Mammary epithelial cell (primary cell): ENCODE measurements at regions of chr7 and their contacts with region 1.

Region 1: GRCh38 chr7:22726345-22727185 is 435 bp upstream of the IL6 start:
- DNase-seq: peak; percentile 84
- H3K4me3 ChIP-seq: no peak overlapping the region
- H3K27ac ChIP-seq: peak overlapping the region; percentile 69
- H3K4me1 ChIP-seq: peaks cover 38% of the 10 kb centered on the region
- H3K27me3 ChIP-seq: no peaks in the 10 kb centered on the region
- CTCF ChIP-seq: peak; percentile 46 to 76

Region 2: GRCh38 chr7:22565315-22565811 is 161.2 kb before region 1 on chr7:
- CTCF ChIA-PET with region 1: interaction called, 25 read pairs
- dilution Hi-C with region 1: no loop called
- in situ Hi-C with region 1: loop called (anchors 5 kb)
- intact Hi-C with region 1: loop called (anchors 1 kb)
- DNase-seq: peak; percentile 92
- H3K4me3 ChIP-seq: no peak overlapping the region
- H3K27ac ChIP-seq: peak overlapping the region; percentile 81
- H3K4me1 ChIP-seq: peaks cover 61% of the 10 kb centered on the region
- H3K27me3 ChIP-seq: no peaks in the 10 kb centered on the region
- CTCF ChIP-seq: no peak

Region 3: DNA sequence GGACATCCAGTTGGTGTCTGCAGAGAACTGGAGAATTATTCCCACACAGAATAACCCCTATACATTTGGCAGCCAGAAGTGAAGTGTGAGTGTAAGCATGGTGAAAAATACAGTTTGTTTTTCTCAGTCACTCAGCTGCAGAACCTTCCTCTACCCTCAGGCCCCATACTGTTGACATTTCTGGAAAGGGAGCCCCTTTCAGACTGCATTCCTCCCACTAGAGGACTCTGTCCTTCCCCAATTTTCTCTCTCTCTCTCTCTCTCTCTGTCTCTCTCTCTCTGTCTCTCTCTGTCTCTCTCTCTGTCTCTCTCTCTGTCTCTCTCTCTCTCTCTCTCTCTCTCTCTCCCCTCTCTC is 139.8 kb before region 1 on chr7:
- CTCF ChIA-PET with region 1: no interaction called
- dilution Hi-C with region 1: no loop called
- in situ Hi-C with region 1: no loop called
- intact Hi-C with region 1: loop called (anchors 1 kb)
- DNase-seq: peak; percentile 34
- H3K4me3 ChIP-seq: no peak overlapping the region
- H3K27ac ChIP-seq: no peak overlapping the region
- H3K4me1 ChIP-seq: peaks cover 33% of the 10 kb centered on the region
- H3K27me3 ChIP-seq: no peaks in the 10 kb centered on the region
- CTCF ChIP-seq: peak; percentile 32 to 59

Region 4: GRCh38 chr7:22624795-22625194 is 101.8 kb before region 1 on chr7:
- CTCF ChIA-PET with region 1: interaction called, 20 read pairs
- dilution Hi-C with region 1: no loop called
- in situ Hi-C with region 1: no loop called
- intact Hi-C with region 1: no loop called
- DNase-seq: no peak
- H3K4me3 ChIP-seq: no peak overlapping the region
- H3K27ac ChIP-seq: no peak overlapping the region
- H3K4me1 ChIP-seq: no peaks in the 10 kb centered on the region
- H3K27me3 ChIP-seq: no peaks in the 10 kb centered on the region
- CTCF ChIP-seq: no peak

Region 5: GRCh38 chr7:22660732-22661131 is 65.8 kb before region 1 on chr7:
- CTCF ChIA-PET with region 1: interaction called, 5 read pairs
- dilution Hi-C with region 1: no loop called
- in situ Hi-C with region 1: no loop called
- intact Hi-C with region 1: loop called (anchors 1 kb)
- DNase-seq: no peak
- H3K4me3 ChIP-seq: no peak overlapping the region
- H3K27ac ChIP-seq: no peak overlapping the region
- H3K4me1 ChIP-seq: peaks cover 1% of the 10 kb centered on the region
- H3K27me3 ChIP-seq: no peaks in the 10 kb centered on the region
- CTCF ChIP-seq: peak in 1 of 2 donors; percentile 24

Region 6: DNA sequence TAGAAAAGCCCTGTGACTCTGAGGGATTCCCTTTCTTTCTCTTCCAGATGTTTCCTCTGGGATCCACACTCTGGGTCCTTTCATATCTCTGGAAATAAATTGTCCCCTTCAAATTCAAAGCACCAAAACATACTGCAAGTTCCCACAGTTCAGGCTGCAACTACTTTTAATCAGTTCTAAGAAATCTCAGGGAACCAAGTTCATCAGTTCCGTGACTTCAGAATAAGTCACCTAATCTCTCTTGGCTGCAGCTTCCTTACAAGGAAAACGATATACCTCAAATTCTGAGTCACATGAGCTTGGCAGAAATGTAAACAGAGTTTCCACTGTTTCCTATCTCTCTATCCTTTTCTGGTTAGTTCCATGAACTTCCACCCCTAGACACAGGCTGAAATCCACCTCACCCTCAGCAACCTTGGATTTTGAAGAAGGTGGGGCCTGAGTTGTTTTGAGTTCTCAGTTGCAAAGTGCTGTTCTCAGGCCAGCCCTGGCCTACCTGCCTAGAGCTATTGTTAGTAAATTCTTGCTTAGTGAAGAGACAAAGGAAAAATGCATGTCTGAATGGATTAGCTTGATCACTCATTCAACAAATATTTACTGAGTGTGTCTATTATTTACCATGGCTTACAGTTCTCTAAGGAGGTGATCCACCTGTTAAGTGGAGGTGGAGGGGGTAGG is 58.9 kb before region 1 on chr7:
- CTCF ChIA-PET with region 1: interaction called, 7 read pairs
- dilution Hi-C with region 1: no loop called
- in situ Hi-C with region 1: no loop called
- intact Hi-C with region 1: loop called (anchors 1 kb)
- DNase-seq: peak; percentile 92
- H3K4me3 ChIP-seq: no peak overlapping the region
- H3K27ac ChIP-seq: peak overlapping the region; percentile 55
- H3K4me1 ChIP-seq: peaks cover 45% of the 10 kb centered on the region
- H3K27me3 ChIP-seq: no peaks in the 10 kb centered on the region
- CTCF ChIP-seq: no peak

Region 7: GRCh38 chr7:22697876-22698606 is 28.5 kb before region 1 on chr7:
- CTCF ChIA-PET with region 1: no interaction called
- dilution Hi-C with region 1: no loop called
- in situ Hi-C with region 1: no loop called
- intact Hi-C with region 1: no loop called
- DNase-seq: no peak
- H3K4me3 ChIP-seq: no peak overlapping the region
- H3K27ac ChIP-seq: no peak overlapping the region
- H3K4me1 ChIP-seq: no peaks in the 10 kb centered on the region
- H3K27me3 ChIP-seq: no peaks in the 10 kb centered on the region
- CTCF ChIP-seq: no peak

Region 8: GRCh38 chr7:22751341-22751740 is 24.8 kb after region 1 on chr7:
- CTCF ChIA-PET with region 1: no interaction called
- dilution Hi-C with region 1: no loop called
- in situ Hi-C with region 1: no loop called
- intact Hi-C with region 1: no loop called
- DNase-seq: no peak
- H3K4me3 ChIP-seq: no peak overlapping the region
- H3K27ac ChIP-seq: no peak overlapping the region
- H3K4me1 ChIP-seq: no peaks in the 10 kb centered on the region
- H3K27me3 ChIP-seq: no peaks in the 10 kb centered on the region
- CTCF ChIP-seq: no peak

Region 9: GRCh38 chr7:23003505-23004246 is 277.1 kb after region 1 on chr7:
- CTCF ChIA-PET with region 1: no interaction called
- dilution Hi-C with region 1: no loop called
- in situ Hi-C with region 1: no loop called
- intact Hi-C with region 1: no loop called
- DNase-seq: no peak
- H3K4me3 ChIP-seq: no peak overlapping the region
- H3K27ac ChIP-seq: no peak overlapping the region
- H3K4me1 ChIP-seq: peaks cover 23% of the 10 kb centered on the region
- H3K27me3 ChIP-seq: no peaks in the 10 kb centered on the region
- CTCF ChIP-seq: no peak